PC-9 (cell line): ENCODE measurements at regions of chr7 and their contacts with region 1.

Region 1: GRCh38 chr7:116588641-116589594 is 64.1 kb downstream of the CAV1 start:
- DNase-seq: peak in 1 of 2 experiments; percentile 6
- H3K4me3 ChIP-seq: no peak overlapping the region
- H3K27ac ChIP-seq: no peak overlapping the region
- H3K4me1 ChIP-seq: peaks cover 14% of the 10 kb centered on the region
- H3K27me3 ChIP-seq: no peaks in the 10 kb centered on the region
- CTCF ChIP-seq: peak; percentile 94

Region 2: GRCh38 chr7:115782696-115783490 is 806.0 kb before region 1 on chr7:
- CTCF ChIA-PET with region 1: no interaction called
- POLR2A ChIA-PET with region 1: no interaction called
- intact Hi-C with region 1: no loop called
- DNase-seq: no peak
- H3K4me3 ChIP-seq: no peak overlapping the region
- H3K27ac ChIP-seq: no peak overlapping the region
- H3K4me1 ChIP-seq: peaks cover 4% of the 10 kb centered on the region; the same call in 1 of the 2 replicates
- H3K27me3 ChIP-seq: no peaks in the 10 kb centered on the region
- CTCF ChIP-seq: no peak

Region 3: GRCh38 chr7:116138202-116138801 is 450.6 kb before region 1 on chr7:
- CTCF ChIA-PET with region 1: no interaction called
- POLR2A ChIA-PET with region 1: no interaction called
- intact Hi-C with region 1: loop called (anchors 1 kb)
- DNase-seq: peak; percentile 24 to 43
- H3K4me3 ChIP-seq: no peak overlapping the region
- H3K27ac ChIP-seq: no peak overlapping the region
- H3K4me1 ChIP-seq: no peaks in the 10 kb centered on the region
- H3K27me3 ChIP-seq: no peaks in the 10 kb centered on the region
- CTCF ChIP-seq: peak; percentile 82

Region 4: DNA sequence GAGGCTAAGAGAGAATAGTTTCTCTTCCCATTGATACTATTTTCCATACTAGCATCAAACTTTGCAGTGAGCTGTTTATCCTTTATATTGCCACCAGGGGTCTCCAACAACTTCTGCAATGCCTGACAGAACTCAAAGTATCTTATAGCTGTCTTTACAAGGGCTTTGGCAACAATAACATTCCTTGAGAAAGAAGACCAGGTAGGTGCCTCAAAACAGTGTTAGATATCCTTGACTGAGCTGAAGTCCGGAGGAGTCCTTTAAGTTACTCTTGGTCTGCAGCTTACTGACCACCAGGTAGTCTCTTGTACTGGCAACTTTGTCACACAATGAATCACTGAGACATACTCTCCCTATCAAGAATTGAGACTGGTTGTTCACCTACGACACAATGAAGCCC is 408.6 kb before region 1 on chr7:
- CTCF ChIA-PET with region 1: interaction called, 17 read pairs
- POLR2A ChIA-PET with region 1: interaction called, 3 read pairs
- intact Hi-C with region 1: loop called (anchors 1 kb)
- DNase-seq: peak; percentile 25 to 49
- H3K4me3 ChIP-seq: no peak overlapping the region
- H3K27ac ChIP-seq: no peak overlapping the region
- H3K4me1 ChIP-seq: peaks cover 11% of the 10 kb centered on the region; the same call in 1 of the 2 replicates
- H3K27me3 ChIP-seq: no peaks in the 10 kb centered on the region
- CTCF ChIP-seq: peak; percentile 89

Region 5: DNA sequence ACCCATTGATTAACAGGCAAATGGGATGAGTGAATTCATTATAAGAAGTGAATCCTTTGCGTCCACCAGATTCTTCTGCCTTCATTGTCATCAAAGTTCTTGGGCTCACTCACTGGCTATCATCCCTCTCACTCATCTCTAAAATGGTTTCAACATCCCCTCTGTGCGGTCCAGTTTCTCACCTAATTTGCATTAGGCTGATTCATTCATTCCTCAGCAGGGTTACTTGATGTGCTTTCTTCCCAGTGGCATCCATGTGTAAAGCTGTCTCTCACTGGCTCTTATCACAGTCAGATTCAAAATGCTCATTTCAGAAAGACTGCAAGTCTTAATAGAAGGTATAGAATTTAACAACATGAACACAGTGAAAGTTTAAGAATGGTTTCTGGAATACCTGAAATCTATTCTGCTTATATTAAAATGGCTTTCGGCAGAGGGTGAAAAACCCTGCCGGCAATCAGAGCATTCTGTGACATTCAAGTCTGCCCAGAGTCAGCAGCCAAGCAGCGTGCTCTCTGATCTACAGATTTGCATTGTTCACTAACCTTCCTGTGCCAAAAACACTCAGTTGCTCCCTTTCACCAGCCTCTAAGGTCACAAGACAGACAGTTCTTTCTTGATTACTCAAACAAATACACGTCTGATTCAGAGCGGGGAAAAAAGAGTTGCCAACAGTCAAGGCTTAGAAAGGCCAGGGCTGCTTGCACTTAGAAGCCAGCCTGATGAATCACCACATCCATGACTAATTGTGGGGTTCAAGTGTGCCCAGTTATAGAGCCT is 271.9 kb before region 1 on chr7:
- CTCF ChIA-PET with region 1: no interaction called
- POLR2A ChIA-PET with region 1: no interaction called
- intact Hi-C with region 1: loop called (anchors 2 kb)
- DNase-seq: peak; percentile 76 to 97
- H3K4me3 ChIP-seq: peak overlapping the region; percentile 29; the same call in 1 of the 2 replicates
- H3K27ac ChIP-seq: peak overlapping the region; percentile 88
- H3K4me1 ChIP-seq: peaks cover 31% of the 10 kb centered on the region
- H3K27me3 ChIP-seq: no peaks in the 10 kb centered on the region
- CTCF ChIP-seq: no peak

Region 6: GRCh38 chr7:116543664-116544063 is 45.3 kb before region 1 on chr7:
- CTCF ChIA-PET with region 1: no interaction called
- POLR2A ChIA-PET with region 1: interaction called, 12 read pairs
- intact Hi-C with region 1: no loop called
- DNase-seq: no peak
- H3K4me3 ChIP-seq: no peak overlapping the region
- H3K27ac ChIP-seq: no peak overlapping the region
- H3K4me1 ChIP-seq: no peaks in the 10 kb centered on the region
- H3K27me3 ChIP-seq: no peaks in the 10 kb centered on the region
- CTCF ChIP-seq: no peak

Region 7: DNA sequence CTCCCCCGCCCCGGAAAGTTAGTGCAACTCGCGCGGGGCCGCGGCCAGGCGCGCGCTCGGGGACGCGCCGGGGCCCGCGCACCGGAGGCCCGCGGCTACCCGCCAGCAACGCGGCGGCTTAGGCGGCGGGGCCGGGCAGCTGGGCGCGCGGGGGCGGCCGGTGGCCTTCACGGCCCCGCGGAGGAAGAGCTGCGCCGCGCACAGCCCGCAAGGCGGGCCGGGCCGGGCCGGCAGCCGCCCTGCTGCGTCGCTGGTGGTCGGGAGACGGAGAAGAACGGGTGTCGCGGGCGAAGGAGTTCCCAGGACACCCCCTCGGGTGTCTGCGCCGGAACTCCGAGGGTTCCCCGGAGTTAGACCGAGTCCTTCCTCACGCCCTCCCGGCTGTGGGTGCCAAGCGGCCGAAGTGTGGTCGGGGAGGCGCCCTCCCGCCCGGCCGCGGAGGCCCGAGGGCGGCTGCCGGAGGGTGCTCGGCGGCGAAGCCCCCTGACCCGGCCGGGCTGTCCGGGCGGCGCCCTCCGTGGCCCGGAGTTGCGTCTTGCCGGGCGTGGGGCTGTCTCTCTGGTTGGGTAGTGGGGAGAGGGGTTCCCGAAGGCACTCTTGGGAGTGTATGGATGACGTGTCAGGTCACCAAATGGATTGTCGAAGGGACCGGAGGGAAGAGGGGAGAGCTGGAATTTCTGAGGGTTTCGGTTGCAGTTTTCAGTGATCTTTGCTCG is 365.0 kb after region 1 on chr7:
- CTCF ChIA-PET with region 1: interaction called, 14 read pairs
- POLR2A ChIA-PET with region 1: no interaction called
- intact Hi-C with region 1: no loop called
- DNase-seq: peak; percentile 63 to 65
- H3K4me3 ChIP-seq: peak overlapping the region; percentile 95
- H3K27ac ChIP-seq: peak overlapping the region; percentile 85
- H3K4me1 ChIP-seq: peaks cover 24% of the 10 kb centered on the region
- H3K27me3 ChIP-seq: no peaks in the 10 kb centered on the region
- CTCF ChIP-seq: no peak

Region 8: DNA sequence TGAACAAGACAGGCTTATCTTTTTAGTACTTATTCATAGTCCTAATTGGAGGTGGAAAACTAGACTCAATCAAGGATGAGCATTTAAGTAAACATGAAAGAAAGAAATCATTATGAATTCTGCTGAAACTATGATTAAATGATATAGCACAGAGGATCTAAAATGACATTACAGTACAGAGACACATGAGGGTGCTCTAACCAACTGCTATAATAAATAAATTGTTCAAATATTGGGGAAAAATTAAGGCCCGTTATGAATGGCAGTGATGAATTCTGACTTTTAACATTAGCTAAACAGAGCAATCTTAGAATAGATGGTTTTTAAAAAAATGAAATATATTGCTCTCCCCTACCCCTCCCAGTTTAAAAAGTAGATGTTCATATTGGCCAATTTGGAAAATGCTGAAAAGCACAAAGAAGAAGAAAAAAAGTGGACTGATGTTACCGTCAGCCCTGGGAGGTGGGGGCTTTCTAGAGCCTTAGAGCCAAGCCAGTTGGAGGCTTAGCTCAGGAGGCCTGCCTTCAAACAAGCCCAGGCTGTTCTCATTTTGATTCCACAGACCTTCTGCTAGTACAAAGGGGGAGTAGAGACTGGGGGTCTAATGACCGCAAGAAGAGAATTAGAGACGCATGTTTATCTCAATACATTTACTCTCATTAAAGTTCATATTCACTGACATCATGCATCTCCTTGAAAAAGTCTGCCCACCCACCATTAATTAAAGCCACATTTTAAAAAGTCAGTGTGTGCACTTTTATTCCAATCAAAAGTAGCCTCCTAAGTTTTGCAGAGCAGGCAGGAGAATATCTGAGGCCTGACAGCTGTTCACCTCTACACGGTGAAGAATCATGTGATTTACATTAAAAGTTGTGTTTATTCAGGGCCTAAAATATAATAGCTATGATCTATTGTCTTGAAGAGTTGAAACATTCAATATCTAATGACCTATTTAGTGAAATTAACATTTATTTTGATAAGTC is 724.0 kb after region 1 on chr7:
- CTCF ChIA-PET with region 1: no interaction called
- POLR2A ChIA-PET with region 1: no interaction called
- intact Hi-C with region 1: no loop called
- DNase-seq: no peak
- H3K4me3 ChIP-seq: no peak overlapping the region
- H3K27ac ChIP-seq: no peak overlapping the region
- H3K4me1 ChIP-seq: no peaks in the 10 kb centered on the region
- H3K27me3 ChIP-seq: no peaks in the 10 kb centered on the region
- CTCF ChIP-seq: peak; percentile 46; the same call in 1 of the 2 replicates